ENCODE measurements at regions of chr2 and their contacts with region 1.

Region 1: DNA sequence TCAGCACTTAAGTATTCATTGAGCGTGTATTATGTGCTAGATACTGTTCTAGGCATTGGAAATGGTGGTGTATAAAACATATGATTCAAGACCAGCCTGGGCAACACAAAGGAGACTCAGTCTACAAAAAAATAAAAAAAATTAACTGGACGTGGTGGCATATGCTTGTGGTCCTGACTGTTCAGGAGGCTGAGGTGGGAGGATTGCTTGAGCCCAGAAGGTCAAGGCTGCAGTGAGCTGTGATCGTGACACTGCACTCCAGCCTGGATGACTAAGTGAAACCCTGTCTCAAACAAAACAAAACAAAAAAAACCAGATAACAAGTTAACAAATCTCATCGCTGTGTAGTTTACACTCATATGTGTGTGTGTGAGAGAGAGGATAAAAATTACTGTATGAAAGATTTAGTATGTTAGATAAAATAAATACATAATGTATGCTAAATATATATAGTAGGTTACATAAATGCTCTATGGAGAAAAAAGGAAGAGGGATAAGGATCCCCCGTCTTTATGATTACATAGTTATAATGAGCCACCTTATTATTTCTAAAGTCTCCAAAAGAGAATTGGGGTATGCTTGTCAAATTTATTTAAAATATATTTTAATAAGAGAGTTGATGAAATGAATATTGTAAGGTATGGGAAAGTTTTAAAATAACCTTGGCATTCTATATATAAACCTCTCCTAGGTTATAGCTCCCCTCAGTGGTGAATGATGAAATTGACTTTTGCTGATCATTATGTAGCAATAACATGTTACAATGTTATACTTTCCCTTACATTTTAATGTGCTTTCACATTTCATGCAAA is 69.2 kb downstream of the EHBP1 start:
- DNase-seq: peak; percentile 22
- H3K4me3 ChIP-seq: no peak overlapping the region
- H3K27ac ChIP-seq: no peak overlapping the region
- H3K4me1 ChIP-seq: no peaks in the 10 kb centered on the region
- H3K27me3 ChIP-seq: no peaks in the 10 kb centered on the region
- CTCF ChIP-seq: peak; percentile 85

Region 2: GRCh38 chr2:62456721-62457539 is 317.8 kb before region 1 on chr2:
- intact Hi-C with region 1: loop called (anchors 2 kb)
- DNase-seq: peak; percentile 76
- H3K4me3 ChIP-seq: peak overlapping the region; percentile 61
- H3K27ac ChIP-seq: no peak overlapping the region
- H3K4me1 ChIP-seq: no peaks in the 10 kb centered on the region
- H3K27me3 ChIP-seq: no peaks in the 10 kb centered on the region
- CTCF ChIP-seq: peak; percentile 96

Region 3: DNA sequence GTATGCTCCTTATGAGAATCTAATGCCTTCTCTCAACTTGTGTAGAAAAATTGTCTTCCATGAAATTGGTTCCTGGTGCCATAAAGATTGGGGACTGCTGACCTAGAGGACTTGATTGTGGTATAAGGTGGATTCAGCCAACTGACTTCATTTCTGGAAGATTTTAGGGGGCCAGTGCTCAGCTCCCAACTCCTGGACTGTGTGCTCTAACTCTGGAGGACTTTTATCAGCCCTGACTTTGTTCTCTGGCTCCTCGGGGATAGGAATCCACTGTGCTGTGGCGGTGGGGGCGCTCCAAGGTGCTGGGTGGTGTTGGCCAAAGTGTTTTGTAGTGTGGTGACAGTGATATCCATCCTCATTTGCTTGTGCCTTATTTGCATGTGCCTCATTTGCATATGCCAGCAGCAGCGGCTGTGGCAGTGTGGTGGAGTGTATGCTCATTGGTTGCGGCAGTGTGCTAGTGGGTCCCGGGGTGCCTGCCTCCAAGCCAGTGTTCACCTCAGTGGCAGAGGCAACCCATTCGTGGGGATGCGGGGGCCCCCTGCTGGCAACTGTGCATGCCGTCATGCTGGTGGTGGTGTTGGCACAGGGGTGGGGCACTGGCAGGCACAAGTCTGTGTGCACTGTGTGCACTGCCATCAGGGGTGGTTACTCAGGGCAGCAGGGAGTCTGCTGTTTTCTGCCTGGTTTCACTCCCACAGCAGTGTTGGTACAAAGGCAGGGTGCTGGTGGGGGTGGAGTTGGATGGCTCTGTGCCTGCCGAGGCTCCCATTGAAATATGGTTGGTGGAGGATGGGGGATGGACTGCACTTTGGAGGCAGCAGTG is 49.7 kb before region 1 on chr2:
- intact Hi-C with region 1: no loop called
- DNase-seq: peak; percentile 39
- H3K4me3 ChIP-seq: no peak overlapping the region
- H3K27ac ChIP-seq: no peak overlapping the region
- H3K4me1 ChIP-seq: no peaks in the 10 kb centered on the region
- H3K27me3 ChIP-seq: no peaks in the 10 kb centered on the region
- CTCF ChIP-seq: no peak